MCF 10A (cell line): ENCODE measurements at regions of chr10 and their contacts with region 1.

Region 1: DNA sequence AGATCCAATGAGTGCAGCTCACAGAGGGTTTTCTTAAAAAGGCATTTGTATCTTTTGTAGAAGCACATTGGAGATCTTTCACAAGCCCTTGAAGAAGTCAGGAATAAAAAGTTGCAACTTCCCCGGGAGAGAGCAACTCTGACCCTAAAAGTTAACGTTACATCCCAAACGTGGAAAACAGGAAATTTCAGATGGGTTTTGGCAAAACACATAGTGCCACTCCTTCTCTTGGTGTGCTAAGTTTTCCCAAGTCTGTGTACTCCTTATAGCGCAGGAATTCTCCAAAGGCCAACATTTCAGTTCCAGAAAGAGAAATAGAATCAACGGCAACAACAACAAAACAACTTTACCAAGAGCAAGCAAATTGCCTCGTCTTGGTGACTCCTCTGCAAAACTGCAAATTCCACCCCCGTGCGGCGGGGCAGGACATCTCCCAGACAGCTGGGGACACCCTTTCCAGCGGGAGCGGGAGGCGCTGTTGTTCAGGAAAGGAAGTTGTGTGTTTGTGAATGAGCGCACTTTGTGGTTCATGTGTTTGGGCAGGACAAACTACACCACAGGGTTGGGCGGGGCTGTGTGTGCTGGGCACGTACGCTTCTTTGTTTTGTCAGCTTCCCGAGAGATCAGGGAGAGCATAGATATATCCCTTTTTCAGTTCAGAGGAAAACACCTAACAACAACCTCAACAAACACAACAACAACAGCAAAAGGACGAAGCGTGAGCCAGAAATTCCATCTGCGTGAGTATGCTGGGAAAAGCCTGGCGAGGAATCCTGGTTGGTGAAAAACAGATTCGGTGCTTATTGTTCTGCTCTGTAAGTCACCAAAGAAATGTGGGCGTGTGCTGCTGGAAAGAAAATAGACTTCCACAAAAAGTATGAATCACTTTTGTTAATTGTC is 294.7 kb upstream of the PITRM1 start:
- DNase-seq: peak; percentile 97
- H3K4me3 Mint-ChIP-seq: peak overlapping the region; percentile 79
- H3K27ac Mint-ChIP-seq: peak overlapping the region; percentile 100
- H3K4me1 Mint-ChIP-seq: peaks cover 46% of the 10 kb centered on the region
- H3K27me3 Mint-ChIP-seq: no peaks in the 10 kb centered on the region
- CTCF ChIP-seq: peak; percentile 55

Region 2: DNA sequence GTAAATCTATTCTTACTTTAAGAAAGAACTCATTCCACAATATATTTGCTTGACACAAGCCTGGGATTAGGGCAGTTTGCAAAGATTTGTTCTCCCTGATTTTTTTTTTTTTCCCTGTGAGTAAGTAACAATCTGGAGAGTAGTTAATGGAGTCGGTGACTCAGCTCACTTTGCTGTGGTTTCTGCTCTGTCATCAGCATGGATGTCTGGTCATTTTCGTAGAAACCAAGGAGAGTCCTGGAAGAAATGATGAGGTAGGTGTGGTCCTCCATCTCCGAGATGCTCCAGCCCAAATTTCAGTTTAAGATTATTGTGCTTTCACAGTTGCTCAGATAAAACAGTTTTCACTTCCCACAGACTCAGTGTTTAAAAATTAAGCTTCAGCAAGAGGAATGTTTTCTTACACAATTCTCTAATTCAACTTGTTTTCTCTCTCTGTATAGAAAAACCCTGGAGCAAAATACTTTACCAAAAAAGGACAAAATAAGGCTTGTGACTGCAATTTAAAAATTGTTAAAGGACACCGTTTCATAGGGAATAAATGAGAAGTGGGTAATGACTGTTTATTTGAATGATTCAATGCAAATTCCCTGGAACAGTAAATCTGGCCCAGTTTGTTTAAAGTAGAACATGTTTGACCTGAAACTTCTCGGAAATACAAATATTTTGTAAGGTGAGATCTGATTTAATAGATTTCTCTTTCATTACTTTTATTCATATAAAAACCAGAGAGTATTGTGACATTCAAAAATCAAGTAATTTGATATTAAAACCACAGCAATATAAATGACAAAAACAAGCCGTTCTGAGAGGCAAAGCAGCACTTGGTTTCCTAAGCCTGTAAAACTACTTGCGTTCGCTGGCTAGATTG is 218.2 kb before region 1 on chr10:
- CTCF ChIA-PET with region 1: interaction called, 3 read pairs
- POLR2A ChIA-PET with region 1: interaction called, 9 read pairs
- intact Hi-C with region 1: loop called (anchors 2 kb)
- DNase-seq: peak; percentile 80
- H3K4me3 Mint-ChIP-seq: no peak overlapping the region
- H3K27ac Mint-ChIP-seq: peak overlapping the region; percentile 87
- H3K4me1 Mint-ChIP-seq: peaks cover 7% of the 10 kb centered on the region
- H3K27me3 Mint-ChIP-seq: peaks cover 17% of the 10 kb centered on the region
- CTCF ChIP-seq: no peak

Region 3: DNA sequence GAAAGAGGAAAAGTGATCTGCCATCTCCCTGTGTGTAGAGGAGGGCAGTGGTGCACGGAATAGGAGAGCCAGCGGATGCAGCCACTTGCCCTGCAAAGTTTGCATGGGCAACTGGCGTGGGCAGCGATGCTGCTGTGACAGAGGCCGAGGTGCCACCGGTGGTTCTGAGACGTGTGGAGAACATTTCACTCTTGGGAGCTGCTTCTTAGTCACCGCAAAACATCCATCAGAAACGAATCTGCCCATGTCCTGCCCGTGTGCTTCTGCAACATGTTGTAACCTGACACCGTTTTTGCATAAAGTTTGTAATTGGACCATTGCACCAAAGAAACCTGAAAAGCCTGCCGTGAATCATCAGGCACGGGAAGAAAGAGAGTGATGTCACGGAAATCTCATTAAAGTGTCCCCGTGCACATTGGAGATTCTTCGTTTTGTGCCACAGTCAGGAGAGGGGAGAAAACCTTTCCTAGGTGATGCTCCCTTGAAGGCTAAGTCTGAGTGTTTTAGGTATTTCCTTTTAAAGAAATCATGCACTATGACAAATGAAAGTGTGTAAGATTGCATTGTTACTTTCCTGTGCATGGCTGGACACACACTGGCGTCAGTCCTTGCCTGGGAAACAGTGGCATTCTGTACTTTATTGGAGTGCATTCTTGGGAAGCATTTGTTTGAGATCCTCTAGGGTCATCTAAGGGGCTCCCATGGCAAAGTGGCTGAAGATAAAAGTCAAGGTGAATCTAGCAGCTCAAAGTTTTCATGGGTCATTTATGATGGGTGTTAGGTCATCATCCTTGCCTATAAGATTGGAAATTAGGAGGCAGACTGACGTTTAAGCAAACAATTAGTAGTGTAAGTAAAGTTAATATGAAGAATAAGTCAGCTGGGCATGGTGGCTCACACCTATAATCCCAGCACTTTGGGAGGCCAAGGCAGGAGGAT is 15.2 kb after region 1 on chr10:
- CTCF ChIA-PET with region 1: no interaction called
- POLR2A ChIA-PET with region 1: interaction called, 38 read pairs
- intact Hi-C with region 1: no loop called
- DNase-seq: peak; percentile 96
- H3K4me3 Mint-ChIP-seq: peak overlapping the region; percentile 55
- H3K27ac Mint-ChIP-seq: peak overlapping the region; percentile 79
- H3K4me1 Mint-ChIP-seq: peaks cover 22% of the 10 kb centered on the region
- H3K27me3 Mint-ChIP-seq: no peaks in the 10 kb centered on the region
- CTCF ChIP-seq: no peak

Region 4: GRCh38 chr10:3512263-3512662 is 45.0 kb after region 1 on chr10:
- CTCF ChIA-PET with region 1: no interaction called
- POLR2A ChIA-PET with region 1: no interaction called
- intact Hi-C with region 1: no loop called
- DNase-seq: no peak
- H3K4me3 Mint-ChIP-seq: no peak overlapping the region
- H3K27ac Mint-ChIP-seq: no peak overlapping the region
- H3K4me1 Mint-ChIP-seq: no peaks in the 10 kb centered on the region
- H3K27me3 Mint-ChIP-seq: no peaks in the 10 kb centered on the region
- CTCF ChIP-seq: no peak

Region 5: DNA sequence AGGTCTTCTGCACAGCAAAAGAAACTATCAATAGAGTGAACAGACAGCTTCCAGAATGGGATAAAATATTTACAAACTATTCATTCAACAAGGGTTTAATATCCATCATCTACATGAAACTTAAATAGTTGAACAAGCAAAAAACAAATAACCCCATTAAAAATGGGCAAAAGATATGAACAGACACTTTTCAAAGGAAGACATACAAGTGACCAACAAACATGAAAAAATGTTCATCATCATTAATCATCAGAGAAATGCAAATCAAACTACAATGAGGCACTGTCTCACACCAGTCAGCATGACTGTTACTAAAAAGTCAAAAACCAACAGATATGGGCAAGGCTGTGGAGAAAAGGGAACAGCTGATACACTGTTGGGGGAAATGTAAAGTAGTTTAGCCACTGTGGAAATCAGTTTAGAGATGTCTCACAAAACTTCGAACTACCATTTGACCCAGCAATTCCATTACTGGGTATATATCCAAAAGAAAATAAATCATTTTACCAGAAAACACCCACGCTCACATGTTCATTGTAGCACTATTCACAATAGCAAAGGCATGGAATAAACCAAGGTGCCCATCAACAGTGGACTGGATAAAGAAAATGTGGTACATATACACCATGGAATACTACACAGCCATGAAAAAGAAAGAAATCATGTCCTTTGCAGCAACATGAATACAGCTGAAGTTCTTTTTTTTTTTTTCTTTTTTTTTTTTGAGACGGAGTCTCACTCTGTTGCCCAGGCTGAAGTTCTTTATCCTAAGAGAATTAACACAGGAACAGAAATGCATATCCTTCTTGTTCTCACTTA is 145.1 kb after region 1 on chr10:
- CTCF ChIA-PET with region 1: no interaction called
- POLR2A ChIA-PET with region 1: no interaction called
- intact Hi-C with region 1: no loop called
- DNase-seq: no peak
- H3K4me3 Mint-ChIP-seq: no peak overlapping the region
- H3K27ac Mint-ChIP-seq: no peak overlapping the region
- H3K4me1 Mint-ChIP-seq: no peaks in the 10 kb centered on the region
- H3K27me3 Mint-ChIP-seq: no peaks in the 10 kb centered on the region
- CTCF ChIP-seq: no peak

Region 6: GRCh38 chr10:3636356-3637181 is 169.3 kb after region 1 on chr10:
- CTCF ChIA-PET with region 1: interaction called, 3 read pairs
- POLR2A ChIA-PET with region 1: interaction called, 5 read pairs
- intact Hi-C with region 1: loop called (anchors 2 kb)
- DNase-seq: peak; percentile 86
- H3K4me3 Mint-ChIP-seq: peak overlapping the region; percentile 71
- H3K27ac Mint-ChIP-seq: peak overlapping the region; percentile 82
- H3K4me1 Mint-ChIP-seq: peaks cover 12% of the 10 kb centered on the region
- H3K27me3 Mint-ChIP-seq: no peaks in the 10 kb centered on the region
- CTCF ChIP-seq: no peak

Region 7: GRCh38 chr10:3740157-3740871 is 273.0 kb after region 1 on chr10:
- CTCF ChIA-PET with region 1: interaction called, 3 read pairs
- POLR2A ChIA-PET with region 1: interaction called, 22 read pairs
- intact Hi-C with region 1: loop called (anchors 2 kb)
- DNase-seq: peak; percentile 85
- H3K4me3 Mint-ChIP-seq: no peak overlapping the region
- H3K27ac Mint-ChIP-seq: peak overlapping the region; percentile 85
- H3K4me1 Mint-ChIP-seq: peaks cover 15% of the 10 kb centered on the region
- H3K27me3 Mint-ChIP-seq: no peaks in the 10 kb centered on the region
- CTCF ChIP-seq: no peak

Region 8: GRCh38 chr10:4678023-4678950 is 1211.0 kb after region 1 on chr10:
- CTCF ChIA-PET with region 1: no interaction called
- POLR2A ChIA-PET with region 1: interaction called, 3 read pairs
- intact Hi-C with region 1: loop called (anchors 10 kb)
- DNase-seq: peak; percentile 81
- H3K4me3 Mint-ChIP-seq: peak overlapping the region; percentile 58
- H3K27ac Mint-ChIP-seq: peak overlapping the region; percentile 90
- H3K4me1 Mint-ChIP-seq: peaks cover 33% of the 10 kb centered on the region
- H3K27me3 Mint-ChIP-seq: no peaks in the 10 kb centered on the region
- CTCF ChIP-seq: no peak